Naive thymus-derived CD4-positive, alpha-beta T cell (primary cell): ENCODE measurements at regions of chr1 and their contacts with region 1.

Region 1: GRCh38 chr1:185156854-185157598 is at the starts of genes SWT1 and TRMT1L:
- DNase-seq: peak; percentile 91 to 97 (median 96)
- ATAC-seq: peak; percentile 95
- H3K4me3 ChIP-seq: peak within 1 kb of the TSS; percentile 88
- H3K4me3 Mint-ChIP-seq: peak within 1 kb of the TSS; percentile 97 to 100 (median 98)
- H3K27ac ChIP-seq: peak within 1 kb of the TSS; percentile 97
- H3K27ac Mint-ChIP-seq: peak within 1 kb of the TSS; percentile 96 to 100 (median 98)
- H3K4me1 ChIP-seq: peaks cover 9 to 20% of the 10 kb centered on the region in 2 donors
- H3K4me1 Mint-ChIP-seq: peaks cover 28 to 67% (median 56%) of the 10 kb centered on the region in 7 donors
- H3K27me3 ChIP-seq: no peaks in the 10 kb centered on the region
- H3K27me3 Mint-ChIP-seq: no peaks in the 10 kb centered on the region
- total RNA-seq, gene SWT1: 4.4 to 11.5 (median 5.2) TPM
- total RNA-seq, gene TRMT1L: 11.6 to 33.9 (median 27.3) TPM

Region 2: DNA sequence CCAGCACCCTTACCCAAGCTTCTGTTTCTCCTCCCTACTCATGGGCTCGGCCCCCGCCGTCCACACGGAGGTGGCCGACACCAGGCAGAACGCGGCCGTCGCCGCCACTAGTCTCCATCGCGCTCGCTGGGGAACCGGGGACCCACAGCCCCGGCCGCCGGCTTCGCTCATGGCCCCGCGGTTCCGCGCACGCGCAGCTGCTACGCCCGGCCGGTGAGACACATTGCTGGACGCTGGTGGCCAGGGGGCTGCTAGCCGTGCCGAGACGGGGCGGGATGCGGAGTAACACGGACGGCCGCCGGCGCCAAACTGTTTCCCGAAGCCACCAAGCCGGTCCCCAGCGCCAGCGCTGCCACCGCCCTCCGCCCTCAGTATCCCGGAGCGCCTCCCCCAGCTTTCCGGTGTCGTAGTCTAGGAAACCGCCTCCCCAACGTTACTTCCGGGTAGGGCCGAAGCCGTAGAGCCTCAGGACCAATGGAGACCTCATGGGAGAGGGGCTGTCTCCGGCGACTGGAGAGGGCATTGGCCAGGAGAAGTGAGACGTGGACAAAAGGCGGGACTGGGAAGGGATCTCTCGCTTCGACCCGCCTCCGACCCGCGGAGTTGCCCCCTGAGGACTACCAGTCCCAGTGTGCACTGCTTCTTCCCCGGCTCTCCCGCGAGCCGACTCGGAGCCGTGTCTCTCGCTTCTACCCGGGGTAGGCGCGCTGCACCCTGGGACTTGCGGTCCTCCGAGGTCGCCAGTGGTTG is 402.4 kb before region 1 on chr1 and contains the start of gene EDEM3:
- CTCF ChIA-PET with region 1: no interaction called
- POLR2A ChIA-PET with region 1: interaction called, 18 read pairs
- intact Hi-C with region 1: loop called (anchors 1 kb)
- DNase-seq: peak; percentile 86 to 100 (median 99)
- ATAC-seq: peak; percentile 96
- H3K4me3 ChIP-seq: peak within 1 kb of the TSS; percentile 84
- H3K4me3 Mint-ChIP-seq: peak within 1 kb of the TSS; percentile 87 to 96 (median 94)
- H3K27ac ChIP-seq: peak within 1 kb of the TSS; percentile 91
- H3K27ac Mint-ChIP-seq: peak within 1 kb of the TSS; percentile 71 to 97 (median 93)
- H3K4me1 ChIP-seq: peaks cover 9 to 13% of the 10 kb centered on the region in 2 donors
- H3K4me1 Mint-ChIP-seq: peaks cover 21 to 50% (median 46%) of the 10 kb centered on the region in 7 donors
- H3K27me3 ChIP-seq: no peaks in the 10 kb centered on the region
- H3K27me3 Mint-ChIP-seq: peaks cover 0 to 13% (median 0%) of the 10 kb centered on the region in 5 donors
- total RNA-seq, gene EDEM3: 21.0 to 55.9 (median 33.9) TPM

Region 3: DNA sequence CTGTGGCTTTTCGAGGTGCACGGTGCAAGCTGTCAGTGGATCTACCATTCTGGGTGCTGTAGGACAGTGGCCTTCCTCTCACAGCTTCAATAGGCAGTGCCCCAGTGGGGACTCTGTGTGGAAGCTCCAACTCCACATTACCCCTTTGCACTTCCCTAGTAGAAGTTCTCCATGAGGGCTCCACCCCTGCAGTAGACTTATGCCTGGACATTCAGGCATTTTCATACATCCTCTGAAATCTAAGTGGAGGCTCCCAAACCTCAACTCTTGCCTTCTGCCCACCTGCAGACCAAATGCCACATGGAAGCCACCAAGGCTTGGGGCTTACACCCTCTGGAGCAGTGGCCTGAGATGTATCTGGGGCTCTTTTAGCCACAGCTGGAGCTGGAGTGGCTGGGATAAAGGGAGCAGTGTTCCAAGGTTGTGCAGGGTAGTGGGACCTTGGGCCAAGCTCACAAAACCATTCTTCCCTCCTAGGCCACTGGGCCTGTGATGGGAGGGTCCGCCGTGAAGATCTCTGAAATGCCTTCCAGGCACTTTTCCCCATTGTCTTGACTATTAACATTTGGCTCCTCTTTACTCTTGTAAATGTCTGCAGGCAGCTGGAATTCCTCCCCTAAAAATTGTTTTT is 129.7 kb before region 1 on chr1:
- CTCF ChIA-PET with region 1: no interaction called
- POLR2A ChIA-PET with region 1: no interaction called
- intact Hi-C with region 1: no loop called
- DNase-seq: no peak
- ATAC-seq: no peak
- H3K4me3 ChIP-seq: no peak overlapping the region
- H3K4me3 Mint-ChIP-seq: no peak overlapping the region
- H3K27ac ChIP-seq: no peak overlapping the region
- H3K27ac Mint-ChIP-seq: no peak overlapping the region
- H3K4me1 ChIP-seq: no peaks in the 10 kb centered on the region
- H3K4me1 Mint-ChIP-seq: no peaks in the 10 kb centered on the region
- H3K27me3 ChIP-seq: no peaks in the 10 kb centered on the region
- H3K27me3 Mint-ChIP-seq: peaks cover 12 to 26% (median 18%) of the 10 kb centered on the region in 5 donors

Region 4: DNA sequence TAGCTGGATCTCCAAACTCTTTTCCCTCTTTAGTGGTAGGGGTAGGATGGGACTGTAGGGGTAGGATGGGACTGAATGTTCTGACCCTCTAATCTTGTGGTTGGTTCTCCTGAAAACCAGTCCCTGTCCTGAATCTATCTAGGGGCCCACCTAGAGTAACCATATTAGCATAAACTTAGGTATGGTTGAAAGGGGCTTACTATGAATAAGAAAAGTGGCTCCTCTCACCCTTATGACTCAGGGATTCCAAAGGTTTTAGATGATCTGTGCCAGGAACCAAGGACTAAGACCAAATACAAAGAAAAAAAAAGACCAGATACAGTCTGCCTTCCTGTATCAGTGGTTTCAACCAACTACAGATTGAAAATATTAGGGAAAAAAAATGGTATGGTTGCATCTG is 82.7 kb before region 1 on chr1:
- CTCF ChIA-PET with region 1: no interaction called
- POLR2A ChIA-PET with region 1: no interaction called
- intact Hi-C with region 1: no loop called
- DNase-seq: no peak
- ATAC-seq: no peak
- H3K4me3 ChIP-seq: no peak overlapping the region
- H3K4me3 Mint-ChIP-seq: no peak overlapping the region
- H3K27ac ChIP-seq: no peak overlapping the region
- H3K27ac Mint-ChIP-seq: no peak overlapping the region
- H3K4me1 ChIP-seq: no peaks in the 10 kb centered on the region
- H3K4me1 Mint-ChIP-seq: peaks cover 0 to 72% (median 47%) of the 10 kb centered on the region in 7 donors
- H3K27me3 ChIP-seq: no peaks in the 10 kb centered on the region
- H3K27me3 Mint-ChIP-seq: no peaks in the 10 kb centered on the region

Region 5: GRCh38 chr1:185170291-185170848 is 13.3 kb after region 1 on chr1:
- CTCF ChIA-PET with region 1: interaction called, 11 read pairs
- POLR2A ChIA-PET with region 1: interaction called, 13 read pairs
- intact Hi-C with region 1: loop called (anchors 1 kb)
- DNase-seq: peak in 8 of 9 donors; percentile 37 to 71 (median 65)
- ATAC-seq: peak; percentile 84
- H3K4me3 ChIP-seq: no peak overlapping the region
- H3K4me3 Mint-ChIP-seq: peak overlapping the region in 4 of 10 donors; percentile 35 to 56 (median 53)
- H3K27ac ChIP-seq: no peak overlapping the region
- H3K27ac Mint-ChIP-seq: peak overlapping the region in 4 of 9 donors; percentile 6 to 62 (median 43)
- H3K4me1 ChIP-seq: peaks cover 0 to 4% of the 10 kb centered on the region in 2 donors
- H3K4me1 Mint-ChIP-seq: peaks cover 0 to 17% (median 5%) of the 10 kb centered on the region in 7 donors
- H3K27me3 ChIP-seq: no peaks in the 10 kb centered on the region
- H3K27me3 Mint-ChIP-seq: no peaks in the 10 kb centered on the region

Region 6: GRCh38 chr1:185559684-185560331 is 402.8 kb after region 1 on chr1:
- CTCF ChIA-PET with region 1: no interaction called
- POLR2A ChIA-PET with region 1: no interaction called
- intact Hi-C with region 1: loop called in 1 of 2 experiments (anchors 1 kb)
- DNase-seq: peak in 8 of 9 donors; percentile 9 to 57 (median 18)
- ATAC-seq: peak; percentile 91
- H3K4me3 ChIP-seq: no peak overlapping the region
- H3K4me3 Mint-ChIP-seq: peak overlapping the region in 8 of 10 donors; percentile 46 to 70 (median 58)
- H3K27ac ChIP-seq: no peak overlapping the region
- H3K27ac Mint-ChIP-seq: peak overlapping the region; percentile 63 to 91 (median 81)
- H3K4me1 ChIP-seq: peaks cover 26 to 35% of the 10 kb centered on the region in 2 donors
- H3K4me1 Mint-ChIP-seq: peaks cover 36 to 53% (median 48%) of the 10 kb centered on the region in 7 donors
- H3K27me3 ChIP-seq: no peaks in the 10 kb centered on the region
- H3K27me3 Mint-ChIP-seq: no peaks in the 10 kb centered on the region

Region 7: DNA sequence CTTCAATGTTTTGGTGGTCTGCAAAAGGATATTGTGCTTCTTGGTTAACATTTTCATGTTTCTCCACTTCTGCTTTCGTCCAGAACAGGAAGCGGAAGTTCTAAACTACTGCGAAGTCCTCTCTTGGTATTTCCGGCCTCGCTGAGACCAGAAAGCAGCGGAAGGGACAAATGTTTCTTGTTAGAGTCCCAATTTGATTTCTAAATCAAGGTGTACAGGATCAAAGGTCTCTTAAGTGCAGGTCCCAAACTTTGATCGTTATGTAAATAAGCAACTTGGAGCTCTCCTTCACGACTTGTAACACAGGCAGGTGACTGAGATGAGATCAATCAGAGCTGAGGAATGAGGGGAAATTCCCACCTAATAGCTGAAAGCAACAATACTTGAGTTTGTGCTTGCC is 537.1 kb after region 1 on chr1:
- CTCF ChIA-PET with region 1: no interaction called
- POLR2A ChIA-PET with region 1: interaction called, 6 read pairs
- intact Hi-C with region 1: loop called in 1 of 2 experiments (anchors 1 kb)
- DNase-seq: peak in 4 of 9 donors; percentile 20 to 26 (median 22)
- ATAC-seq: peak; percentile 60
- H3K4me3 ChIP-seq: peak overlapping the region; percentile 31
- H3K4me3 Mint-ChIP-seq: peak overlapping the region; percentile 73 to 85 (median 78)
- H3K27ac ChIP-seq: peak overlapping the region; percentile 50
- H3K27ac Mint-ChIP-seq: peak overlapping the region; percentile 77 to 96 (median 88)
- H3K4me1 ChIP-seq: peaks cover 0 to 17% of the 10 kb centered on the region in 2 donors
- H3K4me1 Mint-ChIP-seq: peaks cover 11 to 27% (median 14%) of the 10 kb centered on the region in 7 donors
- H3K27me3 ChIP-seq: no peaks in the 10 kb centered on the region
- H3K27me3 Mint-ChIP-seq: peaks cover 0 to 27% (median 9%) of the 10 kb centered on the region in 5 donors